Right lobe of liver (tissue), 6 donors: ENCODE measurements at regions of chr11 and their contacts with region 1.

Region 1: DNA sequence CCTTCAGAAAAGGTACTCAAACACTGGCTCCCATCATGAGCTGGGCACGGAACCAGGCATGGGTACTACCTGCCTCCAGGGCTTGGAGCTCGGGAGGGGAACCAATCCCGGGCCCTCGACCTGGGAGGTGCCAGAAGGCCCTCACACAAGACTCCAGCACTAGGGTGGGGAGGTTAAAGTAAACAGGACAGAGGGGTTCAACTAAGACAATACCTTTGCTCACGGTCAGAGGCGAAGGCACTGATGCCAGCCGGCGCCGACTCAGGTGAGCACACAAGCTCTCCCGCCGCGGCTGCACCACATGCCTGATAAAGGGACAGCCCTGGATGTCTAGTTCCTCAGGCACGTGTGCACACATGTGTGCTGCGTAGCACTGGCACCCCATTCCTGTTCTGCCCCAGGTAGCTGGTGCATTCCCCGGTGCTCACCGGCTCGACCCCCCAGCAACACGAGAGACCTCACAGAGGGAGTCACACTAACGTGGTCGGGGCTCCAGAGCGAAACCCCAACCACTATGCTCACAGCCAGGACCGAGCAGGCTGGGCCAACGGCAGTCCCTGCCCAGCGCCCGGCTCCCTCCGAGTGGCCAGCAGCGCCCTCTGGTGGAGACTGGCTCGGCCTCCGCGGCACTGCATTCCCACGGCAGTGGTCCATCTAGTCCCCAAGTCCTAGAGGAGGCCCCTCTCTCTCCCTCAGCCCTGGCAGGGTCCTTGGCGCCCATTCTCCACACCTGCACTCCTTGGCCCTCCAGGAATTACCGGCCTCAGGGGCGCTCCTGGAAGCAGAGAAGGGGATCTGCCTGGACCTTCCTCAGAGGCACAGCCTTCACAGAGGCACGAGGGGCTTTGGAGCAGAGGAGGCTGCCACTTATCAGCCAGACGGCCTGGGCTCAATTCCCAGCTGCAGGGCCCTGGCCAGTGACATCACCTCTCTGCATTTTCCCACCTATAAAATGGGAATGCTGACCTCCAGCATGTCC is 28.8 kb upstream of the MOB2 start:
- DNase-seq: peak; percentile 74 to 80 (median 78)
- ATAC-seq: peak; percentile 83 to 95 (median 91)
- H3K4me3 ChIP-seq: no peak overlapping the region
- H3K27ac ChIP-seq: no peak overlapping the region
- H3K4me1 ChIP-seq: peaks cover 0 to 7% (median 0%) of the 10 kb centered on the region in 4 donors
- H3K27me3 ChIP-seq: no peaks in the 10 kb centered on the region
- CTCF ChIP-seq: peak; percentile 89 to 96 (median 94)
- POLR2A ChIP-seq: no peak

Region 2: GRCh38 chr11:1202776-1203504 is 312.4 kb before region 1 on chr11:
- intact Hi-C with region 1: loop called (anchors 5 kb)
- DNase-seq: peak; percentile 63 to 74 (median 65)
- ATAC-seq: peak; percentile 82 to 93 (median 90)
- H3K4me3 ChIP-seq: no peak overlapping the region
- H3K27ac ChIP-seq: no peak overlapping the region
- H3K4me1 ChIP-seq: no peaks in the 10 kb centered on the region
- H3K27me3 ChIP-seq: no peaks in the 10 kb centered on the region
- CTCF ChIP-seq: peak; percentile 80 to 96 (median 90)
- POLR2A ChIP-seq: no peak

Region 3: GRCh38 chr11:1401656-1402221 is 113.6 kb before region 1 on chr11:
- intact Hi-C with region 1: no loop called
- DNase-seq: peak; percentile 67 to 77 (median 68)
- ATAC-seq: peak; percentile 55 to 81 (median 69)
- H3K4me3 ChIP-seq: no peak overlapping the region
- H3K27ac ChIP-seq: no peak overlapping the region
- H3K4me1 ChIP-seq: no peaks in the 10 kb centered on the region
- H3K27me3 ChIP-seq: no peaks in the 10 kb centered on the region
- CTCF ChIP-seq: no peak
- POLR2A ChIP-seq: no peak

Region 4: GRCh38 chr11:1458340-1459218 is 56.8 kb before region 1 on chr11:
- intact Hi-C with region 1: no loop called
- DNase-seq: no peak
- ATAC-seq: peak; percentile 6 to 32 (median 14)
- H3K4me3 ChIP-seq: no peak overlapping the region
- H3K27ac ChIP-seq: no peak overlapping the region
- H3K4me1 ChIP-seq: no peaks in the 10 kb centered on the region
- H3K27me3 ChIP-seq: no peaks in the 10 kb centered on the region
- CTCF ChIP-seq: peak in 3 of 4 donors; percentile 9 to 21 (median 19)
- POLR2A ChIP-seq: no peak

Region 5: GRCh38 chr11:1717745-1718144 is 202.4 kb after region 1 on chr11:
- intact Hi-C with region 1: no loop called
- DNase-seq: peak in 1 of 3 donors; percentile 25
- ATAC-seq: no peak
- H3K4me3 ChIP-seq: no peak overlapping the region
- H3K27ac ChIP-seq: no peak overlapping the region
- H3K4me1 ChIP-seq: no peaks in the 10 kb centered on the region
- H3K27me3 ChIP-seq: no peaks in the 10 kb centered on the region
- CTCF ChIP-seq: no peak
- POLR2A ChIP-seq: no peak

Region 6: DNA sequence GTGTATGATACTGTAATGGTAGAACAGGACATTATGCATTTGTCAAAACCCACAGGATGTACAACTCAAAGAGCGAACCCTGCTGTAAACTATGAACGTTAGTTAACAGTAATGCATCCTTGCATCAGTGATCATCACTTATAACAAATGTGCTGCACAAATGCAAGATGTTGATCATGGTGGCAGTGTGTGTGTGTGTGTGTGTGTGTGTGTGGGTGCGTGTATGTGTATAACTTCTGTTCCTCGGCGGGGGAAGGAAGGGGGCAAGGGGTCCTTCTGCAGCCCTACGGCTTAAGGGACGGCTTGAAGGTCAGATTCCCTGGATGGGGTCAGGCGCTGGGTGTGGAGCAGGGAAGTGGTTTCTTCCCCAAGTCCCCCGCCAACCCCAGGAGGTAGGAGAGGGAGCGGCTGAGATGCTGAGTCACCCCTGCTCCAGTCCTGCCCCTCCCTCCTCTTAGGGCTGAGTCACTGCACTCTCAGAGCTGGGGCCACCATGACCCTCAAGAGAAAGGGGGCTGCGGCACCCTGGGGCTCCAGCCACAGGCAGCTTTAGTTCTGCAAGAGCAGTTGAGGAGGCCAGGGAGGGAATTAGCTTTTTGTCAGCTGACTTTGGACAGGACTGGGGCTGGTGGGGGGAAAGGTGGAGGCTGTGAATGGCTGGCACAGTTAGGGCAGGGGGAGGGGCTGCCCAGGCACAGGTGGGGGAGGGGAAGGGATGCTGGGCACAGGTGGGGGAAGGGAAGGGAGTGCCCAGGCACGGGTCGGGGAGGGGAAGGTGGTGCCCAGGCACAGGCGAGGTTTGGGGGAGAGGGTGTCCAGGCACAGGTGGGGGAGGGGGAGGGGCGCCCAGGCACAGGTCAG is 257.1 kb after region 1 on chr11:
- intact Hi-C with region 1: no loop called
- DNase-seq: peak; percentile 57 to 73 (median 69)
- ATAC-seq: peak; percentile 60 to 79 (median 70)
- H3K4me3 ChIP-seq: no peak overlapping the region
- H3K27ac ChIP-seq: peak overlapping the region in 1 of 3 donors; percentile 33
- H3K4me1 ChIP-seq: no peaks in the 10 kb centered on the region
- H3K27me3 ChIP-seq: no peaks in the 10 kb centered on the region
- CTCF ChIP-seq: no peak
- POLR2A ChIP-seq: no peak